Vagina (tissue), 2 donors: ENCODE measurements at regions of chr11 and their contacts with region 1.

Region 1: DNA sequence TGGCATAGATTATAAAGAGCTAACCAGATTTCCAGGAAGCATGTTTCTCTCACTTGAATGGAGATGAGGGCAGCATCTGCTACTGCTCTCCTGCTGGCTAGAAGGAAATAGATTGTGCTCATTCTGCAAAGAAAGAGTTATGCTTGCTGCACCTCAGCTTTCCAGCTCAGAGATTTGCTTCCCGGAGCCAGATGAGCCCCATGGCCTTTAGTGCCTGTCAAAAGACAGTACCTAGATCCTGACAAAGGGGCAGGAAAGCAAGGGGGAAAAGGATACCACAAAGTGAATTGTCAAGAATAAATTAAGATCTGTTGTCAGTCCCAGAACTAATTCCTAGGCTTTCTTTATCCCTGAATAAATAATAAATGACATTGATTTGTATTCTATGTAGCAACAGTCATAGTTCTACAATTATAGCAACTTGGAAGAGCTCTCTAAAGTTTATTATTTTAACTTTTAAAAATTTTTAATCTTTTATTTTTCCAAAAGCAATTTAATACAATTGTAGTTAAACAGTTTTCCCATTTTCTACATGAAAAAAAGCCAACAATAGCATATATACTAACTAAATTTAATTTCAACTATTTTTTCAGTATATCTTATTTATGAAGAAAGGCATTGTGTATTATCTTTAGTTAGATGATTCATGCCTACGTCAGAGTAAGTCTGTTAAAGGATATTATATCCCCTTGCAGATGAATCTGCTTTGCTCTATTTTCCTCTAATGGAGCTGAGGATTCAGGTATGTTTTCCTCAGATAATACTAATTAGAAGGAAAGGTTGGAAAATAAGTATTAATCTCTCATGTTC is 306.1 kb upstream of the DDI1 start:
- DNase-seq: no peak
- H3K4me3 ChIP-seq: no peak overlapping the region
- H3K27ac ChIP-seq: no peak overlapping the region
- H3K4me1 ChIP-seq: no peaks in the 10 kb centered on the region
- H3K27me3 ChIP-seq: no peaks in the 10 kb centered on the region
- CTCF ChIP-seq: no peak
- POLR2A ChIP-seq: no peak

Region 2: DNA sequence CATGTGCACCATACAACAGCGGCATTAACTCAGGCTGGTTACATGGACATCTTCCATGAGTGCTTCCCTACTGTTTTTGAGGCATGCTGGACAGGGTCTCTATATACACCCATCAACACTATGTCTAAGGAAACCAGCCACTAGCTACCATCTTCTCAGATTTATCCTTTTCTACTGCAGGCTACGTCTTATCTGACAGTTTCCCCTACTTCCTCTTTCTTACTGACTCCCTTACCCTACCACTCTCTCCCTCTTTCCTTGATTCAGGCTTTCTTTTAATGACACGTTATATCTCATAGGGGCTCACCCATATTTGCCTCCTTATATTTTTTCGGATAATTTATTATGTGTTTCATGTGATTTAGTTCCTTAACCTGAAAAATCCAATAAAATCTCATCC is 347.9 kb after region 1 on chr11:
- intact Hi-C with region 1: no loop called
- DNase-seq: no peak
- H3K4me3 ChIP-seq: no peak overlapping the region
- H3K27ac ChIP-seq: no peak overlapping the region
- H3K4me1 ChIP-seq: no peaks in the 10 kb centered on the region
- H3K27me3 ChIP-seq: no peaks in the 10 kb centered on the region
- CTCF ChIP-seq: no peak
- POLR2A ChIP-seq: no peak

Region 3: GRCh38 chr11:105054723-105055493 is 1324.6 kb after region 1 on chr11:
- intact Hi-C with region 1: loop called (anchors 5 kb)
- DNase-seq: no peak
- H3K4me3 ChIP-seq: no peak overlapping the region
- H3K27ac ChIP-seq: no peak overlapping the region
- H3K4me1 ChIP-seq: no peaks in the 10 kb centered on the region
- H3K27me3 ChIP-seq: no peaks in the 10 kb centered on the region
- CTCF ChIP-seq: no peak
- POLR2A ChIP-seq: no peak